Ascending aorta (tissue), 2 donors: ENCODE measurements at regions of chr1 and their contacts with region 1.

Region 1: DNA sequence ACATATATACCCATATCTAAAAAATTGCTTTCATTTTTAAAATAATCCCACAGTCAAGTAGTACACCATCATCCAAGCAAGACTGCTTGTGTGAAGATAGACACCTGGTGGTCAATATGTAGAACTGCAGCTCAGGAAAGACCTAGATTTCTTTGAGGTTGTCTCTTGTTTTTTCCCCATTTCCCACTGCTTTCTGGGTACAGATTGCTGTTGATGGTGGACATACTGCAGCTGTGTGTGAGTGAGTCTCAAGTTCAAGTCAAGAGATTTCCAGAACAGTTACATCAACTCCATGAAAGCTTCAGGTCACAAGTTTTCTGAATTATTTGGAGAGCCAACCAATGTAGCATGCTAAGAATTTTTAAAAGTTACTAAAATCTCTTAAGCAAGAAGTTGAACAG is 306.4 kb downstream of the DUSP10 start:
- DNase-seq: no peak
- H3K4me3 ChIP-seq: no peak overlapping the region
- H3K27ac ChIP-seq: no peak overlapping the region
- H3K4me1 ChIP-seq: peaks cover 0 to 6% of the 10 kb centered on the region in 2 donors
- H3K27me3 ChIP-seq: no peaks in the 10 kb centered on the region
- CTCF ChIP-seq: peak; percentile 67 to 98 (median 95)

Region 2: DNA sequence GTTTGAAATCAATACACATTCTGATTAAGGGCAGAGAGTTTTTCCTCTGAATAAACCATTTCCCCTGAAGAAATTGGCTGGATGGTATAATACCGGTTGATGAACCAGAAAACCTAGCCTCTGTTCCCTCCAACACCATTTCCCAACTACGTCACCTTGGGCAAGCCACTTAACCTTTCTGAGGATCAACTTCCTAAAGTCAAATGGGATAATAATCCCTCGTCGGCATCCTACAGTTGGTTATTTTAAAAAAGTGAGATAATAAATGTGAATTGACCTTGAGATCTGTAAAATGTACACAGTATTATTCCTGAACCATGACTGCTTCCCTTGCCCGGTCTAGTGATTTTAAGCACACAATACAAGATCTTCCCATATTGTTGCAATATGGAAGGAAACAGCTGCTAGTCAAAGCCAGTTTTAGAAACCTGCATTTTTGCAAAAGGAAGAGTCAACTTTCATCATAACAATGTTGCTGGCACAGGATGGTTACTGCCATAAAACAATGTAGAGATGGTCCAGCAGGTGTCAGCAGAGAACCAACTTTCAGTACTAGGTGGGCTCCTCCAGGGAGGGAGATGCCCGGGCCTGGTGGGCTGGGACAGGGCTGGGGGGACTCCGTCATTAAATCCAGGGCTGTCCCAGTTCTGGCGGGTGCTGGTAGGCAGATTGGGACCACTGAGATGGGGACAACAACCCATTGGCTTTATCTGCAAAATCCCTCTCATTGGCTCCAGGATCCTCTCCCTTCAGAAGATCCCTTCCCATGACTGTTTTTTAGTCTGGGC is 561.4 kb before region 1 on chr1:
- intact Hi-C with region 1: loop called (anchors 1 kb)
- DNase-seq: peak in 1 of 2 donors; percentile 69
- H3K4me3 ChIP-seq: no peak overlapping the region
- H3K27ac ChIP-seq: no peak overlapping the region
- H3K4me1 ChIP-seq: peaks cover 0 to 7% of the 10 kb centered on the region in 2 donors
- H3K27me3 ChIP-seq: no peaks in the 10 kb centered on the region
- CTCF ChIP-seq: peak; percentile 58 to 74 (median 60)

Region 3: GRCh38 chr1:221263831-221264767 is 171.4 kb before region 1 on chr1:
- intact Hi-C with region 1: loop called (anchors 1 kb)
- DNase-seq: peak in 1 of 2 donors; percentile 84
- H3K4me3 ChIP-seq: no peak overlapping the region
- H3K27ac ChIP-seq: no peak overlapping the region
- H3K4me1 ChIP-seq: no peaks in the 10 kb centered on the region
- H3K27me3 ChIP-seq: no peaks in the 10 kb centered on the region
- CTCF ChIP-seq: peak in 2 of 3 experiments; percentile 36 to 55

Region 4: GRCh38 chr1:221284028-221284427 is 151.5 kb before region 1 on chr1:
- intact Hi-C with region 1: no loop called
- DNase-seq: no peak
- H3K4me3 ChIP-seq: no peak overlapping the region
- H3K27ac ChIP-seq: no peak overlapping the region
- H3K4me1 ChIP-seq: no peaks in the 10 kb centered on the region
- H3K27me3 ChIP-seq: no peaks in the 10 kb centered on the region
- CTCF ChIP-seq: no peak

Region 5: GRCh38 chr1:221415626-221416025 is 19.9 kb before region 1 on chr1:
- intact Hi-C with region 1: no loop called
- DNase-seq: no peak
- H3K4me3 ChIP-seq: no peak overlapping the region
- H3K27ac ChIP-seq: no peak overlapping the region
- H3K4me1 ChIP-seq: no peaks in the 10 kb centered on the region
- H3K27me3 ChIP-seq: no peaks in the 10 kb centered on the region
- CTCF ChIP-seq: no peak

Region 6: GRCh38 chr1:221543529-221544120 is 108.1 kb after region 1 on chr1:
- intact Hi-C with region 1: no loop called
- DNase-seq: no peak
- H3K4me3 ChIP-seq: no peak overlapping the region
- H3K27ac ChIP-seq: no peak overlapping the region
- H3K4me1 ChIP-seq: no peaks in the 10 kb centered on the region
- H3K27me3 ChIP-seq: no peaks in the 10 kb centered on the region
- CTCF ChIP-seq: peak in 2 of 3 experiments; percentile 5 to 30